ENCODE measurements at regions of chr15 and their contacts with region 1.

Region 1: GRCh38 chr15:99733268-99734039 is at the start of gene LYSMD4:
- DNase-seq: peak; percentile 80 to 95
- H3K4me3 ChIP-seq: peak within 1 kb of the TSS; percentile 78
- H3K27ac ChIP-seq: peak within 1 kb of the TSS; percentile 23; the same call in 1 of the 2 replicates
- H3K4me1 ChIP-seq: peaks cover 7% of the 10 kb centered on the region; the same call in 1 of the 2 replicates
- H3K27me3 ChIP-seq: no peaks in the 10 kb centered on the region
- CTCF ChIP-seq: no peak
- total RNA-seq, gene LYSMD4: 4.7 and 5.7 TPM in 2 replicates

Region 2: DNA sequence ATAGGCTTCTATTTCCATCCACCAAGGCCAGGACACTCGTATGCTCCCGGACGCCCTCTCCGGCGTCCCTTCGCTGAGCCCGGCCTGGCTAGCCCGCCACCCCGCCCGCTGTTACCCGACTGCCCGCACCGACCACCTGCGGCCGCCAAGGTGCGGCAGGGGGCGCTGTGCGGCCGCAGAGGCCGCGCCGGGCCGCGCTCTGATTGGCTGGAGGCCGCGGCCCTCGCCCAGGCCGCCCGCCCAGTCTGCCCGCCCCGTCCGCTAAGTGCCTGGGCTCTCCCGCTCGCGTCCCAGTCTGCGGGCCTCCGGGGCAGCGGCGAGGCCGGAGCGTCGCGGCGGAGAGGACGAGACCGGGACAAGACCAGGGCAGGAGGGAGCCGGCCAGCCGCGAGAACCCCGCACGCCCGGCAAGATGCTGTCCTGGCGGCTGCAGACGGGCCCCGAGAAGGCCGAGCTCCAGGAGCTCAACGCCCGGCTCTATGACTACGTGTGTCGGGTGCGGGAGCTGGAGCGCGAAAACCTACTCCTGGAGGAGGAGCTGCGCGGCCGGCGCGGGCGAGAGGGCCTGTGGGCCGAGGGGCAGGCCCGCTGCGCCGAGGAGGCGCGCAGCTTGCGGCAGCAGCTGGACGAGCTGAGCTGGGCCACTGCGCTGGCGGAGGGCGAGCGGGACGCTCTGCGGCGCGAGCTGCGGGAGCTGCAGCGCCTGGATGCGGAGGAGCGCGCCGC is 628.5 kb before region 1 on chr15 and contains the start of gene SYNM:
- CTCF ChIA-PET with region 1: no interaction called
- POLR2A ChIA-PET with region 1: no interaction called
- intact Hi-C with region 1: loop called (anchors 10 kb)
- DNase-seq: peak; percentile 45 to 81
- H3K4me3 ChIP-seq: peak within 1 kb of the TSS; percentile 59
- H3K27ac ChIP-seq: no peak within 1 kb of the TSS
- H3K4me1 ChIP-seq: no peaks in the 10 kb centered on the region
- H3K27me3 ChIP-seq: 0 out of 2 replicates have a peak, but pooled peaks cover 4% of the 10 kb centered on the region
- CTCF ChIP-seq: peak; percentile 71
- total RNA-seq, gene SYNM: 2.2 and 2.4 TPM in 2 replicates

Region 3: DNA sequence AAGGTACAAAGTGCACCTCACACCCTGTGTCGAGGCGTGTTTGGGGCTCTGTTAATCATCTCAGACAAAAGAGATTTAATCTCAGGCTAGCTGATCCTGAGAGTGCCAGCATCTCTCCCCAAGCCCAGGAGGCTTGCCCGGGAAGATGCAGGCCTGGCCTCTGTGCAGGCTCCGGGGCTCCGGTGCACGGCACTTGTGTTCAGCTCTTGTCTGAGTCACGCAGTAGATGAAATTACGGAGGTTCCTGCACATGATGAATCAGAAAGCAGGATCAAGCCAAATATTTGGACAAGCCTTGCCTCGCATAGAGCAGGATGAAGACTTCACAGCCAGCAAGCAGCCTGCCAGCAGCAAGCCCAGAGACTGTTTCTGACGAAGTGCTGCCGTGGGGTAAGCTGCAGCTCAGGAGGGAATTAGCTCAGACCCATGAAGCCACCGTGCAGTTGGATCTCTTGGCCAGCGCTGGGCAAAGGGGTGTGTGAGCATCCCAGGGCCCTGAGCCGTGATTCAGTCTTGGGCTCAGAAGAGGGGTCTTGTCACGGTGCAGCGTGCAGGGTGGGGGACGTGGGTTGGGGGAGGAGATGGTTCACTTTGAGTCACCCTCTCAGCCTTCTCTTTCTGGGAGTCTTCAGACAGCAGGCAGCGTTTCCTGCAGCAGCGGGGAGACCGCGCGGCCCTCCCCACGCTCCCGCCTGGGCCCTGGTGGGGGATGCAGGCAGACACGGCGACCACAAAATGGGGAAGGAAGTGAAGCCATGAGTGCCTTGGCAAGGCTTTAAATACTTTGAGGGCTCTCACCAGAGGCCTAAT is 256.8 kb before region 1 on chr15:
- CTCF ChIA-PET with region 1: no interaction called
- POLR2A ChIA-PET with region 1: no interaction called
- intact Hi-C with region 1: no loop called
- DNase-seq: peak; percentile 42 to 75
- H3K4me3 ChIP-seq: no peak overlapping the region
- H3K27ac ChIP-seq: no peak overlapping the region
- H3K4me1 ChIP-seq: peaks cover 13% of the 10 kb centered on the region
- H3K27me3 ChIP-seq: no peaks in the 10 kb centered on the region
- CTCF ChIP-seq: no peak

Region 4: DNA sequence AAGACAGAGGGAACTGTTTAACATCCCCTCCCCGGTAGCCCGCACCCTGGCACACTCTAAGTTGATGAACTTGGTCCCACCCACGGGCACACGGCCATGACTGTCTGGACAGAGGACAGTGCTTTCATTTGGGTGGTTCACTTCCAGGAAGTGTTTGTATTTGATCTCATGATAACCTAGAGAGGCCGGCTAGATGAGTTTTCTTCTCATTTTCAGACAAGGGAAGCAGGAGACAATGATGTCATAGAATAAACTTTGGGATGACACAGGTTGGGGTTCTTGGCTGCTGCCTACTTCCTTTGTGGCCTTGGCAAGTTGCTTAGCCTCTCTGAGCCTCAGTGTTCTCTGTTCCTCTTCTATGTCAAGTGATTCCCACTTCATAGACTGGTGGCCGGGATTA is 15.9 kb after region 1 on chr15:
- CTCF ChIA-PET with region 1: no interaction called
- POLR2A ChIA-PET with region 1: no interaction called
- intact Hi-C with region 1: loop called (anchors 2 kb)
- DNase-seq: no peak
- H3K4me3 ChIP-seq: no peak overlapping the region
- H3K27ac ChIP-seq: no peak overlapping the region
- H3K4me1 ChIP-seq: no peaks in the 10 kb centered on the region
- H3K27me3 ChIP-seq: no peaks in the 10 kb centered on the region
- CTCF ChIP-seq: no peak

Region 5: DNA sequence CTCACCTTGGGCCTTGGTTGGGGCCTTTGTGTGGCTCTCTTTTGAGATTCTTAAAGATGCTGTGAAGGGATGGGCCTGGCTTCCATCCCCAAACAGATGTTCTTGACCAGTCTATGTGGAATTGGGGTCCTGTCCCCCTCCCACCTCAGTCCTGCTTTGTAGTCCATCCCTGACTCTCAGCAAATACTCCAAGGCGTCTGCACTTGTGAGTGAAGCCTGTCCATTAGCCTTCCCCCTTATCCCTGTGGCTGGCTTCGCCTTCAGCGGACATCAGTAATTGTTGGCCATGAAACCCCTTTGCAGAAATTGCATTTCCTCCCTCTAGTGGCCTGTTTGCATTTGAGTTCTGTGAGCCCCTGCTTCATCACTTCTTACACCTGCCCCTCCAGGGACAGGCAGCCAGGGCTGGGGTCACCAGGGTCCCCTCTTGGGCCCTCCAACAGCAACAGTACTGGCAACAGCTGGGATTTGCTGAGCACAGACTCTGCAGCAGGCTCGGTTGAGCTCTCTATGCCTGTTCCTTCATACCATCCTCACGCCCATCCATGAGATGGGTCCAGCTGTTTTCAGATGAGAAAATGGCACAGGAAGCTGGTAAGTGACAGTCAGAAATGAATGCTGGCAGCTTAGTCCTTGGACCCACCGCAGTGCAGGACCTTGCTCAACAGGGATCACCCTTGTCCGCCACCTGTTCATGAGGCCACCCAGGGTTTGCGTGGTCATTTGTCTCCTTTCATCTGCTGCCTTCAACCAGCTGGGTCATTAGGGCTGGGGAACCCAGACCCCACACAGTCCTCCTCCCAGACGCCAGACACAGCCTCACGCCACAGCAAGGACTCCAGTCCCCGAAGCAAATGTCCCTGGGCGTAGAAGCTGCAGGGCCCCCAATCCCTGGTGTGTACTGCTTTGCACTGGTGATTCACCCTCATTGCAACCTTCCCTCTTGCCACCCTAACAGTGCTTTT is 1176.8 kb after region 1 on chr15:
- CTCF ChIA-PET with region 1: interaction called, 10 read pairs
- POLR2A ChIA-PET with region 1: no interaction called
- intact Hi-C with region 1: no loop called
- DNase-seq: no peak
- H3K4me3 ChIP-seq: no peak overlapping the region
- H3K27ac ChIP-seq: no peak overlapping the region
- H3K4me1 ChIP-seq: no peaks in the 10 kb centered on the region
- H3K27me3 ChIP-seq: no peaks in the 10 kb centered on the region
- CTCF ChIP-seq: no peak; the same call in 1 of the 2 replicates

Region 6: GRCh38 chr15:100987143-100987542 is 1253.7 kb after region 1 on chr15:
- CTCF ChIA-PET with region 1: no interaction called
- POLR2A ChIA-PET with region 1: interaction called, 15 read pairs
- intact Hi-C with region 1: no loop called
- DNase-seq: no peak
- H3K4me3 ChIP-seq: no peak overlapping the region
- H3K27ac ChIP-seq: no peak overlapping the region
- H3K4me1 ChIP-seq: no peaks in the 10 kb centered on the region
- H3K27me3 ChIP-seq: no peaks in the 10 kb centered on the region
- CTCF ChIP-seq: no peak

Measured in PC-9 (cell line).